ENCODE measurements at regions of chr19 and their contacts with region 1.

Region 1: GRCh38 chr19:53010549-53010948 is 3.2 kb upstream of the ERVV-1 start:
- DNase-seq: no peak
- ATAC-seq: no peak
- H3K4me3 ChIP-seq: no peak overlapping the region
- H3K4me3 Mint-ChIP-seq: no peak overlapping the region
- H3K27ac ChIP-seq: no peak overlapping the region
- H3K27ac Mint-ChIP-seq: no peak overlapping the region
- H3K4me1 ChIP-seq: no peaks in the 10 kb centered on the region
- H3K4me1 Mint-ChIP-seq: no peaks in the 10 kb centered on the region
- H3K27me3 ChIP-seq: no peaks in the 10 kb centered on the region
- H3K27me3 Mint-ChIP-seq: no peaks in the 10 kb centered on the region
- CTCF ChIP-seq: no peak

Region 2: GRCh38 chr19:53112286-53112685 is 101.7 kb after region 1 on chr19:
- CTCF ChIA-PET with region 1: no interaction called
- POLR2A ChIA-PET with region 1: no interaction called
- intact Hi-C with region 1: loop called in 1 of 2 experiments (anchors 5 kb)
- DNase-seq: no peak
- ATAC-seq: no peak
- H3K4me3 ChIP-seq: no peak overlapping the region
- H3K4me3 Mint-ChIP-seq: no peak overlapping the region
- H3K27ac ChIP-seq: no peak overlapping the region
- H3K27ac Mint-ChIP-seq: no peak overlapping the region
- H3K4me1 ChIP-seq: no peaks in the 10 kb centered on the region
- H3K4me1 Mint-ChIP-seq: no peaks in the 10 kb centered on the region
- H3K27me3 ChIP-seq: no peaks in the 10 kb centered on the region
- H3K27me3 Mint-ChIP-seq: no peaks in the 10 kb centered on the region
- CTCF ChIP-seq: no peak

Measured in CD4-positive, alpha-beta T cell (primary cell).